ENCODE measurements at regions of chr2 and their contacts with region 1.

Region 1: DNA sequence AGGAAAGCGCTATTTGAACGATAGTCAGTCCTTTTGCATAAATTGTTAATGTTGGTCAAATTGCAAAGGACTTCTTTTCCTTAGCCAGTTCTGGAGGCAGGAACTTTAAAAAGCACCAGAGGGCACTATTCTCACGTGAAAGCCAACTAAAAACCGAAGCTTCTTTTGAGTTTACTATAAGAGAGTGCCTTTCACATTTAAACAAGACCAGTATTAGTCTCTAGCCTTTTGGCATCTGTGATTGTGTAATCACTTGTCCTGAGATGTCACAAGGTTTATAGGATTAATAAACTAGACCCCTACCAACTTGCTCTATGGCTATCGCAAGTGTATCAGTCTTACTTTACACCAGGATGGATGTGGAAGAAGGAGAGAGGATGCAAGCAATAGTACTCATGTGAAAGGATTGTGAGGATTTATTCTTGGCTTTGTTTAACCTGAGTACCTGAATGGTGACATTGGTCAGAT is 14.4 kb upstream of the STAT4 start:
- DNase-seq: no peak
- ATAC-seq: peak; percentile 69 to 77
- H3K4me3 ChIP-seq: peak overlapping the region in 1 of 4 donors; percentile 38
- H3K27ac ChIP-seq: no peak overlapping the region
- H3K4me1 ChIP-seq: peaks cover 19 to 23% of the 10 kb centered on the region in 2 donors
- H3K27me3 ChIP-seq: no peaks in the 10 kb centered on the region
- CTCF ChIP-seq: peak in 4 of 5 experiments; percentile 22 to 65 (median 55)
- POLR2A ChIP-seq: no peak

Region 2: DNA sequence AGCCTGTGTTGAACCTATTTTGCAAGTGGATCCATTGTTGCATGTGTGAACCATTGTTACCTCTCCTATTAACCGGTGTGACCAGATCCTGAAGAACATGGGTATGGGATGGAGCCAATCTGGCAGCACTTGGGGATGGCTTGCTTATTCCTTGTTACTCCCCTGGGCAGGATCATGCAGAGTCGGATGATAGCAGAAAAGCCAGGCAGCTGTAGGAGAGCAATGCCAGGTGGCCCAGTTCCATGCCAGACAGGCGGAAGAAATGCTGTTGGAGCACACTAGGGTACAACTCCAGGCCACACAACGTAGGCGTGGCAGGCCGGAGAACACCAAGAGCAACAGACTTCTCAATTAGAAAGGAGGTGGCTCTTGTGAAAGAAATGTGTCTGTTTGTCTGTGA is 63.7 kb after region 1 on chr2:
- in situ Hi-C with region 1: no loop called
- intact Hi-C with region 1: loop called (anchors 5 kb)
- DNase-seq: peak; percentile 46 to 58
- ATAC-seq: peak; percentile 70 to 88
- H3K4me3 ChIP-seq: no peak overlapping the region
- H3K27ac ChIP-seq: peak overlapping the region in 2 of 4 donors; percentile 10 to 50
- H3K4me1 ChIP-seq: peaks cover 0 to 6% of the 10 kb centered on the region in 2 donors
- H3K27me3 ChIP-seq: no peaks in the 10 kb centered on the region
- CTCF ChIP-seq: no peak
- POLR2A ChIP-seq: no peak